Activated naive CD4-positive, alpha-beta T cell treated with anti-CD3 and anti-CD28 coated beads for 36 hours (primary cell): ENCODE measurements at regions of chr4 and their contacts with region 1.

Region 1: DNA sequence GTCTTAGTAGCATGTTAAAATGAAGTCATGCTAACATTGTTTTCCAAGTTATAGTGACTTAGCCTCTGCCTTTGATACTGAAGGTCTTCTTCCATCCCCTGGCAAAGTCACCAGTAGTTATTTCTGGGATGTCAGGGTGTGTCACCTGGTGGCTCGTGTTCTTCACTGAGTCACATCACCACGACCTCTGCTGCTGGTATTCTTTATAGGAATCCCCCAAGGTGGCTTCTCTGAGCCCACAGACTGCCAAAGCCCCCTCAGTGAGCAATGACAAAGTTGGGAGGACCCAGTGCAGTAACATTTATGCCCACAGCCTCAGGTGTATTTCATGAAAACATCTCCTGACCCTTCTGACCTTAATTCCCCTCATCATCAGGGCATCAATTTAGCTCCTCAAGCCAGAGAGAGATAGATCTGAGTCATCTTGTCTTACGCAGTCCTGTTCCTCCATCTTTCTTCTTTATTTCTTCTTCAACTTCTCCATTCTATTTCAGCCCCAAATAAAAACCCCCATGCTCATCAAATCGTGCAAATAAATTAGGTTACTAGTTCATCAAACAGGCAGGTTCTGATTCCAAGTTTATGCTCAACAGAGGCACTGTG is 29.3 kb upstream of the GPRIN3 start:
- DNase-seq: peak; percentile 32
- H3K4me3 Mint-ChIP-seq: no peak overlapping the region
- H3K27ac Mint-ChIP-seq: no peak overlapping the region
- H3K4me1 Mint-ChIP-seq: peaks cover 8% of the 10 kb centered on the region
- H3K27me3 Mint-ChIP-seq: no peaks in the 10 kb centered on the region

Region 2: GRCh38 chr4:89101256-89102161 is 235.4 kb before region 1 on chr4:
- CTCF ChIA-PET with region 1: no interaction called
- intact Hi-C with region 1: no loop called
- DNase-seq: no peak
- H3K4me3 Mint-ChIP-seq: no peak overlapping the region
- H3K27ac Mint-ChIP-seq: peak overlapping the region; percentile 48
- H3K4me1 Mint-ChIP-seq: peaks cover 25% of the 10 kb centered on the region
- H3K27me3 Mint-ChIP-seq: peaks cover 3% of the 10 kb centered on the region

Region 3: GRCh38 chr4:89307446-89308160 is 29.3 kb before region 1 on chr4 and contains the start of gene GPRIN3:
- CTCF ChIA-PET with region 1: no interaction called
- intact Hi-C with region 1: loop called (anchors 2 kb)
- DNase-seq: peak; percentile 75
- H3K4me3 Mint-ChIP-seq: peak within 1 kb of the TSS; percentile 90
- H3K27ac Mint-ChIP-seq: peak within 1 kb of the TSS; percentile 78
- H3K4me1 Mint-ChIP-seq: peaks cover 55% of the 10 kb centered on the region
- H3K27me3 Mint-ChIP-seq: no peaks in the 10 kb centered on the region
- total RNA-seq, gene GPRIN3: 8.6 to 8.8 TPM

Region 4: DNA sequence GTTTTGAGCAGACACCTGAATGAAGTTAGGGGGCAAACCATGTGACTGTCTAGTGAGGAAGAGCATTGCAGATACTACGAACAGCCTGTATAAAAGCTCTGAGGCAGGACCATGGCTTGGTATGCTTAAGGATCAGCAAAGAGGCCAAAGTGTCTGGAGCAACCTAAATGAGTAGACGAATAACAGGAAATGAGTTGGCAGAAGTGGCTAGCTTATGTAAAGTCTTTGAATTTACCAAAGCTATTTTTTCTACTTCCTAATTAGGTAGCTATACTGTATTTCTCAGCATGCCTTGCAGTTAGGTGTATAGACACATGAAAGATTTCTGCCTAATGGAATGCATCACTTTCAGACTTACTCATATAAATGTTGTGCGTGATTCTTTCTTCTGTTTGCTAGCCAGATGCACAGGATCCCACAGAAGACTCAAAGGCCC is 20.0 kb before region 1 on chr4:
- CTCF ChIA-PET with region 1: no interaction called
- intact Hi-C with region 1: loop called (anchors 1 kb)
- DNase-seq: peak; percentile 31
- H3K4me3 Mint-ChIP-seq: peak overlapping the region; percentile 25
- H3K27ac Mint-ChIP-seq: peak overlapping the region; percentile 74
- H3K4me1 Mint-ChIP-seq: peaks cover 37% of the 10 kb centered on the region
- H3K27me3 Mint-ChIP-seq: no peaks in the 10 kb centered on the region